PC-9 (cell line): ENCODE measurements at regions of chr4 and their contacts with region 1.

Region 1: DNA sequence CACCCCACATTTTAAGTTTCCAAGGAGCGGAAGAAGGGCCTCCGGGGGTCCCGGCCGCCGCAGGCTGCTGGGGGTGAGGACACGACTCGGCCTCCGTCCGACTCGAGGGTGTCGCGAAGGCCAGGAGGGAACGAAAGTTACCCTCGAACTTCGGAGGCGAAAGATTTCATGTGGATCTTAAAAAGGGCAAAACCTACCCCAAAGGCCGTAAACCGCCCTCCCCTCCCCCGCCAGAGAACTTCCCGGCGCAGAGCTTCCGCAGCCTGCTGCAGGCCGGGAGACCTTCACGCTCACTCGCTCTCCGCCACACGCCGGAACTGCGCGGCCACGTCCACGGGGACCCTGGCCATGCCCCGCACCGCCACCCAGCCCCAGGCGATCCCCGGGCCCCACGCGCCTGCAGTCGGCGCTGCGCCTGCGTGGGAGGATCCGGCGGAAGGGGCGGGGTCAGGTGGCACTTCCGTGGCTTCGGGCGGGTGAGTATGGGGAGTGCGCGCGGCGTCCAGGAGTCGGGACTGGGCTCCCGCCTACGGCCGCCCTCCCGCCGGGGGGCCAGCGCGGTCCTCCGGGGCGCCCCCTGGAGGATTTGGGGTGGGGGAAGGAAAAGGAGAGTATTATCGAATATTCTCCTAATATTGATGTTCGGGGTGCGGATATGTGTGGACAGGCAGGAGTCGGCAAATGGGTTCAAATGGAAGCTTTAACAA is at the start of gene MMAA:
- DNase-seq: peak; percentile 66 to 94
- H3K4me3 ChIP-seq: peak within 1 kb of the TSS; percentile 94
- H3K27ac ChIP-seq: peak within 1 kb of the TSS; percentile 86
- H3K4me1 ChIP-seq: no peaks in the 10 kb centered on the region; the same call in 1 of the 2 replicates
- H3K27me3 ChIP-seq: no peaks in the 10 kb centered on the region
- CTCF ChIP-seq: peak; percentile 72
- total RNA-seq, gene MMAA: 5.4 and 6.3 TPM in 2 replicates

Region 2: GRCh38 chr4:145154573-145154972 is 464.5 kb before region 1 on chr4:
- CTCF ChIA-PET with region 1: no interaction called
- POLR2A ChIA-PET with region 1: no interaction called
- intact Hi-C with region 1: loop called (anchors 2 kb)
- DNase-seq: no peak
- H3K4me3 ChIP-seq: no peak overlapping the region
- H3K27ac ChIP-seq: no peak overlapping the region
- H3K4me1 ChIP-seq: no peaks in the 10 kb centered on the region
- H3K27me3 ChIP-seq: no peaks in the 10 kb centered on the region
- CTCF ChIP-seq: 0 out of 2 replicates have a peak, but pooled peaks have one; percentile 31

Region 3: DNA sequence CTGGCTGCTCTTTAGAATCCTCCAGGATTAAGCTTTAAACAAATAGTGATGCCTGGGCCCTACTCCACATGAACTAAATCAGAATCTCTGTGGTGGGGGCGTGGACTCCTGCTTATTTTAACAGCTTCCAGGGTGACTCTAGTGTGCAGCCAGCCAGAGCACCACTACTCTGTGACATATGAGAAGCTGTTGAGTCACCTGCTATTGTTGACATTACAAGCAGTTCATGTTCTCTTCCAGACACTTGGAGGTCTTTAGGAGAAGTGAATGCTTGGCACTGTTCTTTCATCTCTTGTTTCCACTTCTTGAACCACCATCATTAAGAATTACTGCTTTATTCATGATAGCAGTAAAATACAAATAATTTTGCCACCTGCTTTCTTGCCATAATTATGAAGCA is 60.4 kb after region 1 on chr4:
- CTCF ChIA-PET with region 1: no interaction called
- POLR2A ChIA-PET with region 1: interaction called, 3 read pairs
- intact Hi-C with region 1: loop called (anchors 2 kb)
- DNase-seq: peak; percentile 51 to 77
- H3K4me3 ChIP-seq: no peak overlapping the region
- H3K27ac ChIP-seq: peak overlapping the region; percentile 60
- H3K4me1 ChIP-seq: peaks cover 20% of the 10 kb centered on the region
- H3K27me3 ChIP-seq: no peaks in the 10 kb centered on the region
- CTCF ChIP-seq: no peak

Region 4: GRCh38 chr4:145936142-145936996 is 317.3 kb after region 1 on chr4:
- CTCF ChIA-PET with region 1: no interaction called
- POLR2A ChIA-PET with region 1: no interaction called
- intact Hi-C with region 1: loop called (anchors 1 kb)
- DNase-seq: peak; percentile 72 to 75
- H3K4me3 ChIP-seq: peak overlapping the region; percentile 74
- H3K27ac ChIP-seq: peak overlapping the region; percentile 93
- H3K4me1 ChIP-seq: peaks cover 22% of the 10 kb centered on the region
- H3K27me3 ChIP-seq: no peaks in the 10 kb centered on the region
- CTCF ChIP-seq: peak; percentile 32; the same call in 1 of the 2 replicates

Region 5: GRCh38 chr4:146916479-146917076 is 1297.5 kb after region 1 on chr4:
- CTCF ChIA-PET with region 1: no interaction called
- POLR2A ChIA-PET with region 1: no interaction called
- intact Hi-C with region 1: loop called (anchors 10 kb)
- DNase-seq: peak in 1 of 2 experiments; percentile 7
- H3K4me3 ChIP-seq: no peak overlapping the region
- H3K27ac ChIP-seq: no peak overlapping the region
- H3K4me1 ChIP-seq: no peaks in the 10 kb centered on the region
- H3K27me3 ChIP-seq: no peaks in the 10 kb centered on the region
- CTCF ChIP-seq: peak; percentile 81